Heart right ventricle (tissue), 16 donors: ENCODE measurements at regions of chr7 and their contacts with region 1.

Region 1: GRCh38 chr7:116354546-116355408 is 144.4 kb downstream of the TES start:
- DNase-seq: peak; percentile 67 to 88
- ATAC-seq: peak; percentile 75 to 86 (median 83)
- H3K4me3 ChIP-seq: peak overlapping the region in 6 of 10 donors; percentile 21 to 39 (median 30)
- H3K27ac ChIP-seq: peak overlapping the region; percentile 76 to 94 (median 86)
- H3K4me1 ChIP-seq: peaks cover 12 to 73% (median 61%) of the 10 kb centered on the region in 9 donors
- H3K27me3 ChIP-seq: no peaks in the 10 kb centered on the region
- CTCF ChIP-seq: no peak

Region 2: DNA sequence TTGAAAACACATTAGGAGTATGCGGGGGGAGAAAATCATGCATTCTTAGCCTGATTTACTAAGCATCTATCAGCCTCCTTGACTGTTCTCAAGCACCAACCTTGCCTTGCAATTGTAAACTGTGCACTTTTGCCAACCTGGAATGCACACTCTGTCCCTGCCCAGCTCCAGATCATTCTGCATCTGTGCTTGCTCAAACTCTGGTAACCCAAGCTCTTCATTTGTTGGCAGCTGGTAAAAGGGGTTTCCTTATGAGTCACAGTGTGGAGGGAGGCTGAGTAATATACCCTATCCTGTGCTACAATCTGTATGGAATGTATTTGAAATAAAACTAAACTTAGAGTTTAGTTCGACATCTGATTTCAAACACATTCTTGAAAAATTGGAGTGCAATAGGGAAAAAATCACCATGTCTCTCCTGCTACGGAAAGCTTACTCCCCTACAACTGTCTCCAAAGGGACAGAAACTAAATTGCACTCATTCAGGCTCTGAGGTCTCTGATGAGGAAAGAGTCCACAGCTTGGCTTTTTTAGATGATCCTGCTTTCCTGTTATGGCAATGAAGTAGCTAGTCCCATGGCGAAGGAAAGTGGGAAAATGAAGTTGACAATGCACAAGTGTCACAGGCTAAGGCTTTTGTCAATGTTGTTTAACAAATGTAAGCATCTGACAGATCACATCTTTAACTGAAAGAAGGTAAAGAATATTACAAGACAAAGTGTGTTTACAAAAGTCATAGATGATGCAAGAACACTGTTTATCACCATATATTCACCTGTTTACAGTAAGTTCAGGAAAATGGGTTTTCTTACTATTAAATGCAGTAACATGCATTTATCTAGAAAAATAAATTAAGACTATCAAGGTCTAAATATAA is 82.6 kb before region 1 on chr7:
- intact Hi-C with region 1: loop called in 6 of 10 experiments (anchors 5 to 10 kb)
- DNase-seq: peak in 1 of 2 donors; percentile 59
- ATAC-seq: peak; percentile 83 to 99 (median 94)
- H3K4me3 ChIP-seq: no peak overlapping the region
- H3K27ac ChIP-seq: peak overlapping the region; percentile 19 to 77 (median 62)
- H3K4me1 ChIP-seq: peaks cover 9 to 43% (median 27%) of the 10 kb centered on the region in 9 donors
- H3K27me3 ChIP-seq: no peaks in the 10 kb centered on the region
- CTCF ChIP-seq: no peak

Region 3: DNA sequence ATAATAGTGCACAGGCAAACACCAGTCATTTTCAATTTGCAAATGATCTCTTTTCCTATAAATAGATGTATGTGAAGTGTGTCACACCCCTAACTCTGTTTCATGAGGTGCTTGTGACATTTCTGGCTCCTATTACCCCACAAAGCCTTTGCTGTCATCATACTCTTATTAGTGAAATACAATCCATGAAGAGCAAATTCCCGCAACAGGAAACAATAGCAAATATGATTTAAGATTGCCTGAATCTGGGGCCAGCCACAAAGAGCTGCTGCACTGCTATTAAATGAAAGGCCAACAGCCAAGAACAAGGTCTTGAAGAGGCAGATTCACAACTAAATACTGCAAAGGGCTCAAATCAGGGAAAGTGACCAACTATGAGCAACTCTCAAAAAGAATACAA is 48.5 kb after region 1 on chr7:
- intact Hi-C with region 1: no loop called
- DNase-seq: no peak
- ATAC-seq: peak in 5 of 8 donors; percentile 43 to 79 (median 58)
- H3K4me3 ChIP-seq: no peak overlapping the region
- H3K27ac ChIP-seq: peak overlapping the region in 4 of 10 donors; percentile 20 to 50 (median 41)
- H3K4me1 ChIP-seq: peaks cover 0 to 61% (median 28%) of the 10 kb centered on the region in 9 donors
- H3K27me3 ChIP-seq: no peaks in the 10 kb centered on the region
- CTCF ChIP-seq: no peak

Region 4: GRCh38 chr7:116426428-116427156 is 71.8 kb after region 1 on chr7:
- intact Hi-C with region 1: loop called in 1 of 10 experiments (anchors 2 kb)
- DNase-seq: peak in 1 of 2 donors; percentile 49
- ATAC-seq: peak; percentile 57 to 90 (median 70)
- H3K4me3 ChIP-seq: no peak overlapping the region
- H3K27ac ChIP-seq: peak overlapping the region in 5 of 10 donors; percentile 7 to 56 (median 18)
- H3K4me1 ChIP-seq: peaks cover 0 to 18% (median 14%) of the 10 kb centered on the region in 9 donors
- H3K27me3 ChIP-seq: no peaks in the 10 kb centered on the region
- CTCF ChIP-seq: no peak

Region 5: GRCh38 chr7:116468534-116468933 is 113.8 kb after region 1 on chr7:
- intact Hi-C with region 1: no loop called
- DNase-seq: no peak
- ATAC-seq: no peak
- H3K4me3 ChIP-seq: no peak overlapping the region
- H3K27ac ChIP-seq: no peak overlapping the region
- H3K4me1 ChIP-seq: peaks cover 0 to 30% (median 11%) of the 10 kb centered on the region in 9 donors
- H3K27me3 ChIP-seq: no peaks in the 10 kb centered on the region
- CTCF ChIP-seq: no peak

Region 6: DNA sequence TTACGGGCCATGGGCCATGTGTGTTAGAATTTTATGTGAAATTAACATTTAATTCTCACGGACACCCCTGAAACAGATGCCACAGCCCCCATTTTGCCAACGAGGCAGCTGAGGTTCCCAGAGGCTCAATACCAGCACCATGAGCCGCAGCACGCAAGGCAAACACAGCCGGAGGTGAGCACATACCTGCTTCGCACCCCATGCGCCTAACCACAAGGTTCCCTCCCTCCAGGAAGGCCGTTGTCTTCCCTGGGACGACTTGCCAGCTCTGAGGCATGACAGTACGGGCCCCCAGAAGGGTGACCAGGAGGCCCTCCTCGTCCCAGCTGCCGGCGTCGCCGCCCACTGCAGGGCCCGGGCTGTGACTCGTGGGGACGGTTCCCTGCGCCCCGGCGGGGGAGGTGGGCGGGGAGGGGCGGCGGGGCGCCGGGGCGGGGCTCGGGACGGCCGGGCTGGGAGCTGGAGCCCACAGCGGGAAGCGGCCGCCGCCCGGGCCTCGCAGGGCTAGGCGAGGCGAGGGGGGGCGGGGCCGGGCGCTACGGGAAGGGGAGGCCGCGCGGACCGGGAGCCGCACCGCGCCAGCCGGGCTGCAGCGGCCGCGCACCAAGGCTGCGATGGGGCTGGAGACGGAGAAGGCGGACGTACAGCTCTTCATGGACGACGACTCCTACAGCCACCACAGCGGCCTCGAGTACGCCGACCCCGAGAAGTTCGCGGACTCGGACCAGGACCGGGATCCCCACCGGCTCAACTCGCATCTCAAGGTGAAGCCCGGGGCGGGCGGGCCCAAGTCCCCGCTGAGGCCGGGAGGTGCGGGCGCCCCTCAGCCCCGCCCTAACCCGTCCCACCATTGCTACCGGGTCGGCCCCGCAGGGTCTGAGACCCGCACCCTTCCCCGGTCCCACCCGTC is 144.6 kb after region 1 on chr7 and contains the start of gene CAV2:
- intact Hi-C with region 1: loop called in 4 of 10 experiments (anchors 2 to 10 kb)
- DNase-seq: peak; percentile 82 to 85
- ATAC-seq: peak; percentile 76 to 94 (median 88)
- H3K4me3 ChIP-seq: peak within 1 kb of the TSS; percentile 66 to 96 (median 84)
- H3K27ac ChIP-seq: peak within 1 kb of the TSS; percentile 92 to 100 (median 99)
- H3K4me1 ChIP-seq: peaks cover 0 to 52% (median 25%) of the 10 kb centered on the region in 9 donors
- H3K27me3 ChIP-seq: peaks cover 0 to 32% (median 0%) of the 10 kb centered on the region in 7 donors
- CTCF ChIP-seq: no peak
- total RNA-seq, gene CAV2: 196 to 277 (median 244) TPM

Region 7: GRCh38 chr7:116525913-116526861 is 171.4 kb after region 1 on chr7:
- intact Hi-C with region 1: loop called in 9 of 10 experiments (anchors 1 to 10 kb)
- DNase-seq: peak; percentile 82 to 88
- ATAC-seq: peak; percentile 78 to 93 (median 87)
- H3K4me3 ChIP-seq: peak overlapping the region; percentile 61 to 96 (median 76)
- H3K27ac ChIP-seq: peak overlapping the region; percentile 90 to 99 (median 96)
- H3K4me1 ChIP-seq: peaks cover 2 to 81% (median 57%) of the 10 kb centered on the region in 9 donors
- H3K27me3 ChIP-seq: peaks cover 0 to 45% (median 0%) of the 10 kb centered on the region in 7 donors
- CTCF ChIP-seq: peak; percentile 79 to 95 (median 90)

Region 8: DNA sequence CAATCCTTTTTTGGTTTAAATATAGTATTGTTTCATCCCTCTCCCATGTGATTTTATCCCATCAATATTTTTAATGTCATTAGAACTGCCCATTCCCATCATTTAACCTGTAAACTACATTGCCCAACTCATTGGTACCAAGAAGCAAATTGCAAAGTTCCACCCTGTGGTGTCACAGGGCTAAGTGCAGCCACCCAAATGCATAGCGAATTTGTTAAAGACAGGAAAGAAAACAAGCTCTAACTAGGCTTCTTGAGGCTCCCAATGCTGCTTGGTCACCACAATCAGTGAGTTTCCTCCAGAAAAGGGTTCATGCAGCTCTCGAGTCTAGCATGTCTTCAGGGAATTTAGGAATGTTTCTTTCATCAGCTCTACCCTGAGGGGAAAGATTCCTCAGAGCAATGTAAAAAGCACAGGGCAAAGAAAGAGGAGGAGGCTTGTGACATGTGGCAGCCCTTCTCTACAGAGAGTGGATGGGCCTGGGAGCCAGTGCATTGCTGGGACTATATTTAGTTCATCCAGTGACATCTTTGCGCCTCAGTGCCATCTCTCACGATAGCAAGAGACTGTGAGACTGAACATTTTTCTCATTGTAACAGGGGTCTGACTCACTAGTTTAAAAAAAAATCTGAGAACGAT is 228.1 kb after region 1 on chr7:
- intact Hi-C with region 1: loop called in 6 of 10 experiments (anchors 5 to 10 kb)
- DNase-seq: peak in 1 of 2 donors; percentile 70
- ATAC-seq: peak; percentile 84 to 92 (median 88)
- H3K4me3 ChIP-seq: peak overlapping the region in 4 of 10 donors; percentile 12 to 26 (median 19)
- H3K27ac ChIP-seq: peak overlapping the region in 9 of 10 donors; percentile 40 to 80 (median 69)
- H3K4me1 ChIP-seq: peaks cover 4 to 39% (median 25%) of the 10 kb centered on the region in 9 donors
- H3K27me3 ChIP-seq: no peaks in the 10 kb centered on the region
- CTCF ChIP-seq: no peak